Ovary (tissue), 10 donors: ENCODE measurements at regions of chr6 and their contacts with region 1.

Region 1: DNA sequence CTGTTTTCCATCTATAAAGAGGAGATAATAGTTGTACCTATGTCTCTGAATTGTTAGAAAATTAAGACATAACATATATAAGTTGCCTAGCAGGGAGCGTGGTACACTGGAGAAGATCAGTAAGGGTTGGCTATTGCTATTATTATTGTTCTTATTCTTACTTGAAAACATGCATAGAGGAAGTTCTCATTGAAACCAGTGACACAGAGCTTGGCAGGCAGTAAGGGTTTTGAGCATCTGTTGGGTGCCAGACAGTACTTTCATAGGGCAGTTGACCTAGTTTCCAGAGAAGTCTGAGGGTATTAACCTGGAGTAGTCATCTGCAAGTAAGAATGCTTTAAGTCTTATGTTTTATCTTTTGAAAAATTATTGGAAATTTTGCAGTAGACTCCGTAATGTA is 13.3 kb upstream of the SGK1 start:
- DNase-seq: no peak
- H3K4me3 ChIP-seq: no peak overlapping the region
- H3K27ac ChIP-seq: no peak overlapping the region
- H3K4me1 ChIP-seq: no peaks in the 10 kb centered on the region
- H3K27me3 ChIP-seq: no peaks in the 10 kb centered on the region
- CTCF ChIP-seq: no peak
- EP300 ChIP-seq: no peak
- POLR2A ChIP-seq: no peak

Region 2: GRCh38 chr6:134809132-134809531 is 477.9 kb after region 1 on chr6:
- intact Hi-C with region 1: loop called in 1 of 4 experiments (anchors 10 kb)
- DNase-seq: no peak
- H3K4me3 ChIP-seq: no peak overlapping the region
- H3K27ac ChIP-seq: no peak overlapping the region
- H3K4me1 ChIP-seq: no peaks in the 10 kb centered on the region
- H3K27me3 ChIP-seq: no peaks in the 10 kb centered on the region
- CTCF ChIP-seq: no peak
- EP300 ChIP-seq: no peak
- POLR2A ChIP-seq: no peak